Endothelial cell of umbilical vein (primary cell): ENCODE measurements at regions of chr16 and their contacts with region 1.

Region 1: GRCh38 chr16:75198135-75198600 is 8.8 kb downstream of the CTRB2 start:
- DNase-seq: no peak
- H3K4me3 ChIP-seq: no peak overlapping the region
- H3K27ac ChIP-seq: no peak overlapping the region
- H3K4me1 ChIP-seq: peaks cover 4% of the 10 kb centered on the region
- H3K27me3 ChIP-seq: peaks cover 5 to 7% of the 10 kb centered on the region in 2 experiments
- CTCF ChIP-seq: no peak
- POLR2A ChIP-seq: no peak

Region 2: GRCh38 chr16:75238132-75238852 is 40.1 kb after region 1 on chr16:
- CTCF ChIA-PET with region 1: interaction called, 12 read pairs
- POLR2A ChIA-PET with region 1: no interaction called
- dilution Hi-C with region 1: no loop called
- intact Hi-C with region 1: no loop called
- DNase-seq: no peak
- H3K4me3 ChIP-seq: no peak overlapping the region
- H3K27ac ChIP-seq: peak overlapping the region; percentile 48
- H3K4me1 ChIP-seq: peaks cover 10% of the 10 kb centered on the region
- H3K27me3 ChIP-seq: no peaks in the 10 kb centered on the region
- CTCF ChIP-seq: no peak
- POLR2A ChIP-seq: no peak

Region 3: DNA sequence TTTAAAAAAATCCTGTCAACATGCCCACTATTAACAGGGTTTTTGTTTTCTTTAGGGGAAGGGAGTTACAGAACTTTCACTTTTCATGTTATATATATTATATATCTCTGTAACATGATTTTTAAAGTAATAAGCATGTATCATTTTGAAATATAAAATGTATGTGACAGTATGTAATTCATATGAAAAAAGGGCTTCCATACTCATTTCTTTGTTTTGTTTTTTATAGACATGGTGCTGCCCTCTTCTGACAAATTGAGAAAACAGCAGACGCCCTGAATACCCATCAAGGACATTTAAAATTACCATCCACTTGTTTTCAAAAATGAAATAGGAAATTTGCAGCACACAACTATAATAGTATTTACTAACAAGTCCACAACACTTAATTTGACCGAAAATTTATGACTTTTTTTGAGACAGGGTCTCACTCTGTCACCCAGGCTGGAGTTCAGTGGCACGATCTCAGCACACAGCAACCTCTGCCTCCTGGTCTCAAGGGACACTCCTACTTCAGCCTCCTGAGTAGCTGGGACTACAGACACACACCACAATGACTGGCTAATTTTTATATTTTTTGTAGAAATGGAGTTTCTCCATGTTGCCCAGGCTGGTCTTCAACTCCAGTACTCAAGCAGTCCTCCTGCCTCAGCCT is 204.8 kb after region 1 on chr16:
- CTCF ChIA-PET with region 1: interaction called, 186 read pairs
- POLR2A ChIA-PET with region 1: no interaction called
- dilution Hi-C with region 1: no loop called
- intact Hi-C with region 1: loop called (anchors 1 kb)
- DNase-seq: peak; percentile 74
- H3K4me3 ChIP-seq: no peak overlapping the region
- H3K27ac ChIP-seq: peak overlapping the region; percentile 89
- H3K4me1 ChIP-seq: peaks cover 13% of the 10 kb centered on the region
- H3K27me3 ChIP-seq: no peaks in the 10 kb centered on the region
- CTCF ChIP-seq: peak; percentile 41 to 42
- POLR2A ChIP-seq: no peak

Region 4: GRCh38 chr16:75432828-75433731 is 234.9 kb after region 1 on chr16 and contains the start of gene CFDP1:
- CTCF ChIA-PET with region 1: interaction called, 23 read pairs
- POLR2A ChIA-PET with region 1: no interaction called
- dilution Hi-C with region 1: no loop called
- intact Hi-C with region 1: no loop called
- DNase-seq: peak; percentile 94
- H3K4me3 ChIP-seq: peak within 1 kb of the TSS; percentile 37 to 81 (median 72)
- H3K27ac ChIP-seq: peak within 1 kb of the TSS; percentile 91
- H3K4me1 ChIP-seq: peaks cover 10% of the 10 kb centered on the region
- H3K27me3 ChIP-seq: no peaks in the 10 kb centered on the region
- CTCF ChIP-seq: no peak
- POLR2A ChIP-seq: peak; percentile 73
- total RNA-seq, gene CFDP1: 49.6 and 53.8 TPM in 2 replicates

Region 5: GRCh38 chr16:75464130-75464918 is 266.2 kb after region 1 on chr16 and contains the start of gene TMEM170A:
- CTCF ChIA-PET with region 1: interaction called, 117 read pairs
- POLR2A ChIA-PET with region 1: no interaction called
- dilution Hi-C with region 1: no loop called
- intact Hi-C with region 1: loop called (anchors 1 kb)
- DNase-seq: peak; percentile 100
- H3K4me3 ChIP-seq: peak within 1 kb of the TSS; percentile 65 to 93 (median 68)
- H3K27ac ChIP-seq: peak within 1 kb of the TSS; percentile 74
- H3K4me1 ChIP-seq: peaks cover 10% of the 10 kb centered on the region
- H3K27me3 ChIP-seq: no peaks in the 10 kb centered on the region
- CTCF ChIP-seq: peak; percentile 100
- POLR2A ChIP-seq: peak; percentile 98
- total RNA-seq, gene TMEM170A: 22.2 and 24.2 TPM in 2 replicates

Region 6: DNA sequence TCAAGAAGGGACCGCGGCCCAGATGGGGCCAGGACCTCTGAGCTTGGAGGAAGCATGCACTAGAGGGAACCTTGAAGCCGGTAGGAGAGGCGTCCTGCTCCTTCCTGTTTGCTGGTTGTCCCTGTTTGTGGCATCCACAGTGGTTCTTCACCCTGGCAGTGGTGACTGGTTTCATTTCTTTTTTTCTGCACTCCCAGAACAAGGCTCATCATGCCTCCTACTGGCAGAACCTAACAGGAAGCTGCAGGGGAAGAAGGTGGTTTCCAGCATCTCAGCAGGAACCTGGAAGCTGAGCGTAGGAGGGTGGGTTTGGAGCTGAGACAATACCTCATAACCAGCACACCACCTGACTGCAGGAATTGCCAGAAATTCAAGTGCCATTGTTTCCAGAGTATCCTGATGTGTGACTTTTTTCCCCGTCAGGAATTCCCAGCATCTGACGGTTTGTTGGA is 352.1 kb after region 1 on chr16:
- CTCF ChIA-PET with region 1: interaction called, 14 read pairs
- POLR2A ChIA-PET with region 1: no interaction called
- dilution Hi-C with region 1: no loop called
- intact Hi-C with region 1: no loop called
- DNase-seq: peak; percentile 52
- H3K4me3 ChIP-seq: no peak overlapping the region
- H3K27ac ChIP-seq: no peak overlapping the region
- H3K4me1 ChIP-seq: peaks cover 12% of the 10 kb centered on the region
- H3K27me3 ChIP-seq: no peaks in the 10 kb centered on the region
- CTCF ChIP-seq: peak; percentile 47 to 48
- POLR2A ChIP-seq: no peak